SK-N-SH (cell line): ENCODE measurements at regions of chr2 and their contacts with region 1.

Region 1: DNA sequence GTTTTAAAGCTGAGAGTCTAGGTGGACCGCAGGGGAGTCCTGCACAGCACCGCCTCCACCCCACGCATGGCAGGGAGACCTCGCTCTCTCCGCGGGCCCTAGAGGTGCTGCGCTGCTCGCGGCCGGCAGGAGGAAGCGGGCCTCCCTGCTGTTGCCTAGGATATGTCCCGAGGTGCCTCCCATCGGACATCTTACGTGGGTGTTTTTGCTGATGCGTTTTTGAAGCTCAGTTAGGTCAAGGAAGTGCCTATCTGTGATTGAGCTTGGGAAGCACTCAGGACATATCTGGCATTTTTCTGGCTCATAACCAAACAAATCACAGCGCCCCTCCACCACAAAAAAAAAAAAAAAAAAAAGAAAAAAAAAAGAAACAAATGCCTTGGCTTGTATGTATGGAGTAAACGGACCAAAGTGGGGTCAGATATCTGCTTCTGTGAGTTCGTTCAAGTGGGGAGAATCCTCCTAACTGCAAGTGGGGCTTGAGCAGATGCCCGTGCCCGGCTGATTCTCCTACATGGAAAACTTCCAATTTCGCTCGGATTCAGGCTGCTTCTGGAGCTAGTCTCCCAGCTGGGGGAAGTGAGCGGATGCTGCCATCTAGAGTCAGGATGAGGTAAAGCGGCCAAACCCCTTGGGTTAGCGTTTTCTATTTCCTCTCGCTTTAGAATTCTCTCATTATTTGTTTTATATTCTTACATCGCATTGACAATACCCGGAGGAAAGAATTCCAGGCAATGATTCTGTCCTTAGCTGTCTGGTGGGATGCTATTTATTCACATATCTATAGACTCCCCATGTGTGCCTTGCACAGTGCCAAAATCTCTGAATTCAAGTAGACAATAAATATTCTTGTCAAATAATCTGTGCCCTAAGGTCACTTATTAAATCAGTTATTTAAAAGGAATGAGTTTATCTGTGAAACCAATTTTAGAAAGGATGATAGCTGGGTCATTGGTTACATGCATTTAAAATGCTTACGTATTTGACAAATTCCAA is 95.3 kb downstream of the CD8B2 start:
- DNase-seq: peak; percentile 94
- H3K4me3 ChIP-seq: peak overlapping the region; percentile 38 to 62
- H3K27ac ChIP-seq: peak overlapping the region in 1 of 2 experiments; percentile 68; a peak in 2 of 4 replicates
- H3K4me1 ChIP-seq: peaks cover 0 to 39% of the 10 kb centered on the region in 2 experiments; a peak in 2 of 4 replicates
- H3K27me3 ChIP-seq: no peaks in the 10 kb centered on the region; the same call in 1 of the 2 replicates
- CTCF ChIP-seq: peak; percentile 88
- EP300 ChIP-seq: no peak
- RAD21 ChIP-seq: peak; percentile 98

Region 2: DNA sequence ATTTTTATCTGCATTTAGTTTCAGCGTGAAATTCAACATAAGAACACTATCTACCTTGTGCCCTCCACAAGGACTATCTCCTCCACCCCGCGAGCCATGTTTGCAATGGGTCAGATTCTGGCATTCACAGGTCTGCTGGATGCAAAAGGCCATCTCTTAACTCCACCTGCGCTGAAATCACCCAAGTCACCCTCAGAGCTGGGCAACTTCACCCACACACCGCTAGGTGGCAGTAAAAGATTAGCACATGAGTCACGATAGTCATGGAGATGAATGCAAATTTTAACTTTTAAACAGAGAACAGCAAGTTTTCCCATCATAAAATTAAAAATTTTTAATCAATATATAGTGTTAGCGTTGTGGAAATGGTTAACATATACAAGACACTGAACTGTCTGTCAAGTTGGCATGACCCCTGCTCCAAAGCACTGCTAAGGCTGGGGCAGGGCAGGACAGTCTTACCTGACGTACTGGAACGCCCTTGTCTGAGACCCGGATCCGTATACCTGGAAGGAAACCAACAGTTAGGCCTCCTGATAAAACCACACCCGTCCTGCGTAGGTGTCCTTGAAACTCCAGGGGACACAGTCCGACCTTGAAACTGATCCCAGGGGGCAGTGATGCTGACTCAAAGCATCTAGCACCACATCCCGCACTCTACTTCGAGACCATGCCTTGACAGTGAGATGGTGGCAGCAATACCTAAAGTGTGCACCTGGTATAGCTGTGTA is 477.9 kb before region 1 on chr2:
- CTCF ChIA-PET with region 1: interaction called, 19 read pairs
- POLR2A ChIA-PET with region 1: no interaction called
- DNase-seq: peak; percentile 81
- H3K4me3 ChIP-seq: no peak overlapping the region; a peak in 1 of 4 replicates
- H3K27ac ChIP-seq: no peak overlapping the region
- H3K4me1 ChIP-seq: peaks cover 4 to 7% of the 10 kb centered on the region in 2 experiments; a peak in 2 of 4 replicates
- H3K27me3 ChIP-seq: no peaks in the 10 kb centered on the region
- CTCF ChIP-seq: peak; percentile 98
- EP300 ChIP-seq: no peak
- RAD21 ChIP-seq: peak; percentile 96

Region 3: GRCh38 chr2:106542811-106543259 is 39.6 kb before region 1 on chr2:
- CTCF ChIA-PET with region 1: interaction called, 21 read pairs
- POLR2A ChIA-PET with region 1: no interaction called
- DNase-seq: peak; percentile 88
- H3K4me3 ChIP-seq: peak overlapping the region; percentile 27 to 47; a peak in 2 of 4 replicates
- H3K27ac ChIP-seq: no peak overlapping the region
- H3K4me1 ChIP-seq: peaks cover 0 to 5% of the 10 kb centered on the region in 2 experiments; a peak in 1 of 4 replicates
- H3K27me3 ChIP-seq: no peaks in the 10 kb centered on the region
- CTCF ChIP-seq: peak; percentile 88
- EP300 ChIP-seq: no peak
- RAD21 ChIP-seq: peak; percentile 87

Region 4: DNA sequence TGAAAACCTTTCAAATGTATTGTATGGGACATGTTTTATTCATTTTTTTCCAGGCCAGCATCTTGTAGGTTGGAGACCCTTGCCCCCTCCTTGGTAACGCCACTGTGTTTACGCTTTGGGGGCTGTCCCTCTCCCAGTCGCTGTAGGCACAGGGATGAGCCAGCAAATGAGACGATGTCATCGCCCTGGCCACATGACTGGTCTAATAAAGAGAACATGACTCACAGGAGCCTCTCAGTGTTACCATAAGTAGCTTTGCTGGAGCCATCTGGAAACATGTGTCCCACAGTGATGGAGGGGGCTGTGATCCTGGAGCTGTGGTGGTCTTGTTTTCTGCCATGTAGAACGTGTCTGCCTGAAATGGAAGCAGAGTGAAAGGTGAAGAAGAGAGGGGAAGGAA is 16.4 kb before region 1 on chr2:
- CTCF ChIA-PET with region 1: interaction called, 294 read pairs
- POLR2A ChIA-PET with region 1: interaction called, 10 read pairs
- DNase-seq: no peak
- H3K4me3 ChIP-seq: no peak overlapping the region
- H3K27ac ChIP-seq: no peak overlapping the region
- H3K4me1 ChIP-seq: peaks cover 0 to 28% of the 10 kb centered on the region in 2 experiments; a peak in 2 of 4 replicates
- H3K27me3 ChIP-seq: no peaks in the 10 kb centered on the region
- CTCF ChIP-seq: no peak
- EP300 ChIP-seq: no peak
- RAD21 ChIP-seq: no peak

Region 5: GRCh38 chr2:106596844-106597243 is 14.4 kb after region 1 on chr2:
- CTCF ChIA-PET with region 1: interaction called, 21 read pairs
- POLR2A ChIA-PET with region 1: no interaction called
- DNase-seq: no peak
- H3K4me3 ChIP-seq: no peak overlapping the region
- H3K27ac ChIP-seq: no peak overlapping the region
- H3K4me1 ChIP-seq: no peaks in the 10 kb centered on the region
- H3K27me3 ChIP-seq: no peaks in the 10 kb centered on the region
- CTCF ChIP-seq: peak; percentile 51
- EP300 ChIP-seq: no peak
- RAD21 ChIP-seq: no peak